ENCODE measurements at regions of chr1 and their contacts with region 1.

Region 1: DNA sequence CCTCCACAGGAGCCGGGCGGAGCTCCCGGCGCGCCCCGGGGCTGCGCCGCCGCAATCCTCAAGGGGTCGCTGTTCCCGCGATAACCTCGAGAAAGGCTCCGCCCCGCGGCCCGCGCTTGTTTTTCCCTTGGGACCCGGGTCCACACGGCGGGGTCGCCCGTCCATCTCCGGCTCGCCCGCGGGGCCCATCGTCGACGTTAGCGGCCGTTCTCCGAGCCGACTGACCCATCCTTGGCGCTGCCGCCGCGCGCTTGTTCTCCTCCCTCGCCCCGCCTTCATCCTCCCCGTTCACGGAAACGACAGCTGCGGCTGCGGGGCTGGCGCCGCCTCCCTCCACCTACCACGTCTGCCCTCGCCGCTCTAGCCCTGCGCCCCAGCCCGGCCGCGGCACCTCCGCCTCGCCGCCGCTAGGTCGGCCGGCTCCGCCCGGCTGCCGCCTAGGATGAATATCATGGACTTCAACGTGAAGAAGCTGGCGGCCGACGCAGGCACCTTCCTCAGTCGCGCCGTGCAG is at the start of gene SH3GLB1:
- DNase-seq: peak; percentile 97
- H3K4me3 Mint-ChIP-seq: peak within 1 kb of the TSS; percentile 100
- H3K27ac Mint-ChIP-seq: peak within 1 kb of the TSS; percentile 99
- H3K4me1 Mint-ChIP-seq: peaks cover 33% of the 10 kb centered on the region
- H3K27me3 Mint-ChIP-seq: no peaks in the 10 kb centered on the region
- total RNA-seq, gene SH3GLB1: 57.0 and 59.7 TPM in 2 replicates

Region 2: GRCh38 chr1:86499987-86500593 is 204.4 kb before region 1 on chr1:
- intact Hi-C with region 1: loop called (anchors 10 kb)
- DNase-seq: no peak
- H3K4me3 Mint-ChIP-seq: no peak overlapping the region
- H3K27ac Mint-ChIP-seq: no peak overlapping the region
- H3K4me1 Mint-ChIP-seq: peaks cover 12% of the 10 kb centered on the region
- H3K27me3 Mint-ChIP-seq: peaks cover 28% of the 10 kb centered on the region

Region 3: GRCh38 chr1:86567878-86568277 is 136.6 kb before region 1 on chr1:
- intact Hi-C with region 1: no loop called
- DNase-seq: no peak
- H3K4me3 Mint-ChIP-seq: no peak overlapping the region
- H3K27ac Mint-ChIP-seq: no peak overlapping the region
- H3K4me1 Mint-ChIP-seq: no peaks in the 10 kb centered on the region
- H3K27me3 Mint-ChIP-seq: no peaks in the 10 kb centered on the region

Region 4: DNA sequence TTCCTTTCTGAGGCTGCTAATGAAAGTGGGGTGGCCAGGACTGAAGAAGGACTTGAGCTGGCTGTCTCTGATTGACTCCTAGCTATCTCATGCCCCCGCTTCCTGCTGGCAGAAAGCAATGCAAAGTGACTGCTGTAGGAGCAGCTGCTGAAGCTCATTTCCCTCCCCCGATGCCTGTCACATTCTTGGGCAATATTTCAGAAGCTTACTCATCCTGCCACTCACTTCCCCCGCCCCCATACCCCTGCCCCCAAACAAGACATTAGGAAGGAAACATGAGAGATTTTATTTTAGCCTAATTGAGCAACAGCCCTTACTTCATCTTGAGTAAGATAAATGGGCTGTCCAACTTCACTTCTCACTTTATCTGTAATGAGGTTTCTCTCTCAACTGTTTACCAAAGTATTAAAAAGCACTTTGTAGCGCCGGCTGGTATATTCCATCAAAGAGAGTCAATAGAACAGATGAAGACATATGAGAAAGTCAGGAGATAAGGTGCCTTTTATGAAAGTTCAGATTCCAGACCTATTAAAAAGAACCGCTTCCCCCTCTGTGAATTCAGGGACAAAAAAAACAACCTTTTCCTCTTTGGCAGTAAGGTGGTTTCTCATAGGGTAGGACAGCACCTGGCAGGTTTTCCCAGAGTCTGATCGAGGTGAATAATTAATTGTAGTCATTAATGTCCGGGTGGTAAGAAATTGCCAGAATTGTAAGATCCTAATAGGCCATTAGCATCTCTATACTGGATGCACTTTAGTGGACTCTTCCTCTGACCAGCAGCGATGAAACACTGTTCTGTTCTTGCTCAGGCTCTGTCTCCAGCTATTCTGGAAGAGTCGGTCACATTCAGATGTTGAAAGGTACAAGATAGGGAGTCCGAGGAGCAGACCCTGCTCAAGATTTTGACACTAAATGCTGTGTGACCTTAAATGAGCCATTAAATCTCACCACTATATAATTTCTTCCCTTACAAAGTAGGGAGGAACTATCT is 70.1 kb after region 1 on chr1:
- intact Hi-C with region 1: loop called (anchors 1 kb)
- DNase-seq: no peak
- H3K4me3 Mint-ChIP-seq: peak overlapping the region; percentile 54
- H3K27ac Mint-ChIP-seq: peak overlapping the region; percentile 78
- H3K4me1 Mint-ChIP-seq: peaks cover 15% of the 10 kb centered on the region
- H3K27me3 Mint-ChIP-seq: no peaks in the 10 kb centered on the region

Region 5: GRCh38 chr1:87045761-87046304 is 341.3 kb after region 1 on chr1:
- intact Hi-C with region 1: loop called (anchors 10 kb)
- DNase-seq: peak; percentile 88
- H3K4me3 Mint-ChIP-seq: peak overlapping the region; percentile 71
- H3K27ac Mint-ChIP-seq: peak overlapping the region; percentile 86
- H3K4me1 Mint-ChIP-seq: peaks cover 25% of the 10 kb centered on the region
- H3K27me3 Mint-ChIP-seq: no peaks in the 10 kb centered on the region

Region 6: GRCh38 chr1:87151500-87152421 is 447.2 kb after region 1 on chr1:
- intact Hi-C with region 1: loop called (anchors 10 kb)
- DNase-seq: peak; percentile 71
- H3K4me3 Mint-ChIP-seq: peak overlapping the region; percentile 79
- H3K27ac Mint-ChIP-seq: peak overlapping the region; percentile 56
- H3K4me1 Mint-ChIP-seq: peaks cover 14% of the 10 kb centered on the region
- H3K27me3 Mint-ChIP-seq: peaks cover 51% of the 10 kb centered on the region